HCT116 (cell line): ENCODE measurements at regions of chr6 and their contacts with region 1.

Region 1: GRCh38 chr6:54267798-54268197 is 40.4 kb upstream of the TINAG start:
- DNase-seq: peak; percentile 54
- ATAC-seq: peak; percentile 86
- H3K4me3 ChIP-seq: no peak overlapping the region
- H3K27ac ChIP-seq: no peak overlapping the region
- H3K4me1 ChIP-seq: no peaks in the 10 kb centered on the region
- H3K27me3 ChIP-seq: no peaks in the 10 kb centered on the region
- CTCF ChIP-seq: peak; percentile 46 to 65 (median 63); a peak in 5 of 6 replicates
- POLR2A ChIP-seq: no peak
- RAD21 ChIP-seq: peak; percentile 60

Region 2: GRCh38 chr6:53718597-53719460 is 549.0 kb before region 1 on chr6:
- CTCF ChIA-PET with region 1: no interaction called
- POLR2A ChIA-PET with region 1: no interaction called
- RAD21 ChIA-PET with region 1: no interaction called
- intact Hi-C with region 1: no loop called
- DNase-seq: peak; percentile 65
- ATAC-seq: peak; percentile 90
- H3K4me3 ChIP-seq: no peak overlapping the region
- H3K27ac ChIP-seq: no peak overlapping the region
- H3K4me1 ChIP-seq: peaks cover 0 to 6% of the 10 kb centered on the region in 2 experiments; a peak in 1 of 4 replicates
- H3K27me3 ChIP-seq: no peaks in the 10 kb centered on the region
- CTCF ChIP-seq: peak; percentile 55 to 91 (median 83); a peak in 5 of 6 replicates
- POLR2A ChIP-seq: no peak
- RAD21 ChIP-seq: peak; percentile 69

Region 3: DNA sequence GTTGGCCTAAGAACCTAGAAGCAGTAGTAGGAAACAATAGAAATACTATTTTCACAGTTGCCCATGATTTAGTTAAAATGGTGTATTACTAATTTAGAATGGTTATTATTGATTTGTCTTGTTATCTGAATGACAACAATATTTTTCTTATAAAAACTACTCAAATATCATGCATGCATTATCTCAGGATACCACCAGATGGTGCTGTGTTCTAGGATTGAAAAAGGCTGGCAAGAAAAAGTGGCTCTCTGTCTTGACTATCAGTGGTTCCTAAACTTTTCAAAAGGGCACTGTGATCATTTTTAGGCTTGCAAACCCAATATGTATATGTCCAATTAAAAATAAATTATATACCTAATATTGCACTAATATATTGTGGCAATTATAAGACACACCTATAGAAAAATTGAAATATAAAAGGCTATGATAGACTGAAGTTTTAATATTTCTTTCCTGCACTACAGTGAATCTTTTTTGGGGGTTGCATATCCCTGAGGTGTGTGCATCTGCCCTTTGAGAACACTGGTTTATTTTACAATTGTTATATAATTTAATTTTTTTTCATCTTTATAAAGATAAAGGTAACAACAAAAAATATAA is 288.2 kb before region 1 on chr6:
- CTCF ChIA-PET with region 1: no interaction called
- POLR2A ChIA-PET with region 1: no interaction called
- RAD21 ChIA-PET with region 1: no interaction called
- intact Hi-C with region 1: loop called (anchors 2 kb)
- DNase-seq: peak; percentile 46
- ATAC-seq: no peak; the same call in 1 of the 2 replicates
- H3K4me3 ChIP-seq: no peak overlapping the region
- H3K27ac ChIP-seq: no peak overlapping the region
- H3K4me1 ChIP-seq: peaks cover 7 to 25% of the 10 kb centered on the region in 2 experiments
- H3K27me3 ChIP-seq: no peaks in the 10 kb centered on the region
- CTCF ChIP-seq: peak; percentile 66 to 82 (median 75)
- POLR2A ChIP-seq: no peak
- RAD21 ChIP-seq: peak; percentile 81

Region 4: GRCh38 chr6:53986165-53986720 is 281.6 kb before region 1 on chr6:
- CTCF ChIA-PET with region 1: interaction called, 16 read pairs
- POLR2A ChIA-PET with region 1: no interaction called
- RAD21 ChIA-PET with region 1: no interaction called
- intact Hi-C with region 1: loop called (anchors 1 kb)
- DNase-seq: peak; percentile 34
- ATAC-seq: peak; percentile 59
- H3K4me3 ChIP-seq: no peak overlapping the region
- H3K27ac ChIP-seq: no peak overlapping the region
- H3K4me1 ChIP-seq: peaks cover 8 to 36% of the 10 kb centered on the region in 2 experiments
- H3K27me3 ChIP-seq: no peaks in the 10 kb centered on the region
- CTCF ChIP-seq: peak; percentile 71 to 96 (median 77)
- POLR2A ChIP-seq: no peak
- RAD21 ChIP-seq: peak; percentile 93

Region 5: DNA sequence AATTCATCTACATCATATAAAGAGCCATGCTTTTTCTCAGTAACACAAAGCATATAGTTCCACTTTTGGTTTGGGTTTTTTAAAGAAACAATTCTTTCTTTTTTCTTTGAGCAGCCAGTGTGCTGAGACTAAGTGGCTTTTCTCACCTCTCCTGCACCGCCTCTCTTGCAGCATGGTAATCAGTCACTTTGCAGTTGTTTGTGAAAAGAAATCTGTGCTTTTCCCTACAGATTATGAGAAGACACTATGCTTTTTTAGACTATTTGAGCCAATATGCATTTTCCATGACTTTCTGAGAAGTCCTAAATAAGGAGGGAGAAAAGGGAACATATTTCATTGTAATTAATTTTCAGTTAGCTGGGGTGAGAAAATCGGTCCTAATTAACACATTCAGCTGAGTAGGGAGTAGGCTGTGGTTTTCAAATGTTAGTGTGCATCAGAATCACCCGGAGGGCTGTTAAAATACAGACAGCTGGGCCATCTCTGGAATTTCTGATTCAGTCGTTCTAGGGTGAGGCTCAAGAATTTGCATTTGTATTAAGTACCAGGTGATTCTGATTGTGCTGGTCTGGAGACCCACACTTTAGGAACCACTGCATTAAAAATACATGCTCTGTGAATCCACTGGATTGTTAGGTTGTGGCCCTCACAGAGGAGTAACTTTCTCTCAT is 195.7 kb after region 1 on chr6:
- CTCF ChIA-PET with region 1: no interaction called
- POLR2A ChIA-PET with region 1: no interaction called
- RAD21 ChIA-PET with region 1: no interaction called
- intact Hi-C with region 1: no loop called
- DNase-seq: no peak
- ATAC-seq: no peak
- H3K4me3 ChIP-seq: no peak overlapping the region
- H3K27ac ChIP-seq: no peak overlapping the region
- H3K4me1 ChIP-seq: no peaks in the 10 kb centered on the region
- H3K27me3 ChIP-seq: no peaks in the 10 kb centered on the region
- CTCF ChIP-seq: no peak
- POLR2A ChIP-seq: no peak
- RAD21 ChIP-seq: no peak